IMR-90 (cell line): ENCODE measurements at regions of chr3 and their contacts with region 1.

Region 1: GRCh38 chr3:42652611-42653302 is 740 bp upstream of the ZBTB47 start:
- DNase-seq: peak; percentile 78
- ATAC-seq: peak; percentile 45
- H3K4me3 ChIP-seq: peak overlapping the region; percentile 70
- H3K27ac ChIP-seq: peak overlapping the region; percentile 77
- H3K4me1 ChIP-seq: peaks cover 35% of the 10 kb centered on the region
- H3K27me3 ChIP-seq: no peaks in the 10 kb centered on the region
- CTCF ChIP-seq: no peak
- POLR2A ChIP-seq: peak; percentile 58; the same call in 1 of the 2 replicates
- RAD21 ChIP-seq: no peak

Region 2: GRCh38 chr3:42090973-42091731 is 561.6 kb before region 1 on chr3 and contains the start of gene TRAK1:
- CTCF ChIA-PET with region 1: no interaction called
- POLR2A ChIA-PET with region 1: no interaction called
- dilution Hi-C with region 1: no loop called
- in situ Hi-C with region 1: no loop called
- intact Hi-C with region 1: loop called (anchors 5 kb)
- DNase-seq: no peak
- ATAC-seq: no peak
- H3K4me3 ChIP-seq: no peak within 1 kb of the TSS
- H3K27ac ChIP-seq: no peak within 1 kb of the TSS
- H3K4me1 ChIP-seq: peaks cover 5% of the 10 kb centered on the region
- H3K27me3 ChIP-seq: no peaks in the 10 kb centered on the region
- CTCF ChIP-seq: no peak
- POLR2A ChIP-seq: no peak
- RAD21 ChIP-seq: no peak
- total RNA-seq, gene TRAK1: 26.7 and 28.1 TPM in 2 replicates

Region 3: DNA sequence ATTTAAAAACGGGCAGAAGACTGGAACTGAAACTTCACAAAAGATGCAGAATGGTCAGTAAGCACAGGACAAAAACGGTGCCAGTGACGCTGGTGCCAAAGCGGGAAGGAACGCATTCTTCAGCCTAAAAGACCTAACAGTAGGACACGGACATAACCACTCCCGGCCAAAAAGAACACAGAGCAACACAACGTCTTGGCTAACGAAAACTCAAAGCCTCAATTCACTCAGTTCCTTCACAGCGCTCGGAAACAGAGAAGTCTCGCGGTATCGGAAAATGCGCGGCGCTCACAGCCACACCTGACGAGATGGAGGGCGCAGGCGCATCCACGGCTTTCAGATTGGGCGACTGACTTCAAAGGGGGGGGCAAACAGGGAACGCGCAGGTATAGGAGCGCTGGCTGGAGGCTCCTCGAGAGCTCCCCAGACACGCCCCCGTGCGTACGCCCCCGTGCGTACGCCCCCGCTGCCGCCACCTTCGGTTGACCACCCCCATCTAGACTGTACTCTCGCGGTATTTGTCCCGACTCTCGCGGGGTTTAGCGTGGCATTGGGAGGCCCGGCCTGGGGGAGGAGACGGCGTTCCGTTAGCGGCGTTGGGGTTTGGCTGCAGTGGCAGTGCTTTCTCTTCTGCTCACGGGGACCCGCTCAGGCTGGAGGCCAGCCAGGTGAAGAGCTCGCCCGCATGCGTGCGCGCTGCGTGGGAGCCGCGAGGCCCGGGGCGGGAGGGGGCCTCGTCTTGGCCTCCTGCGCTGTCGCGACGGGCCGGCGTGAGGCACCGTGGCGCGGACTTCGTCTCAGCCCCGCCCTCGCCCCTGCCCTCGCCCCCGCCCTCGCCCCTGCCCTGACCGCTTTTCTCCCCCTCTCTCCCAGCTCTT is 52.4 kb before region 1 on chr3 and contains the start of gene NKTR:
- CTCF ChIA-PET with region 1: no interaction called
- POLR2A ChIA-PET with region 1: no interaction called
- dilution Hi-C with region 1: no loop called
- in situ Hi-C with region 1: no loop called
- intact Hi-C with region 1: loop called (anchors 5 kb)
- DNase-seq: peak; percentile 97
- ATAC-seq: peak; percentile 94
- H3K4me3 ChIP-seq: peak within 1 kb of the TSS; percentile 64
- H3K27ac ChIP-seq: peak within 1 kb of the TSS; percentile 85
- H3K4me1 ChIP-seq: 0 out of 2 replicates have a peak, but pooled peaks cover 3% of the 10 kb centered on the region
- H3K27me3 ChIP-seq: no peaks in the 10 kb centered on the region
- CTCF ChIP-seq: no peak
- POLR2A ChIP-seq: peak; percentile 85
- RAD21 ChIP-seq: no peak
- total RNA-seq, gene NKTR: 24.0 and 51.4 TPM in 2 replicates

Region 4: DNA sequence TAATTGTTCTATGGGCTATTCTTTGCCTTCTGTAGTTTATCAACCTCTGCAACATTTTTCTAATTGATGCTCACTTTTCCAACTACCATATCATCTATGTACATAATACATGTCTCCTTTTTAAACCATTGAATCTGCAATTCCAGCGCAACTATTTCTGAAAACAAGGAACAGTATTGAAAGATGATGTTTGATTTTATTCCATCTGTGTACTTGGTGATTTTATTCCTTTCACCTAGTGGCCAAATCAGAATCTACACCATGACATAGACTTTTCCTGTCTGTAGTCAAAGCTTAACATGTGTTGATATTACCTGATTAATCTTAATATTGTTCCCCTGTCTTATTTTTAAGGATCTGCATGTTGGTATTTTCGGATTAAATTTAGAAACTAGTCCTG is 39.3 kb before region 1 on chr3:
- CTCF ChIA-PET with region 1: interaction called, 4 read pairs
- POLR2A ChIA-PET with region 1: no interaction called
- dilution Hi-C with region 1: no loop called
- in situ Hi-C with region 1: no loop called
- intact Hi-C with region 1: loop called (anchors 5 kb)
- DNase-seq: no peak
- ATAC-seq: no peak
- H3K4me3 ChIP-seq: no peak overlapping the region
- H3K27ac ChIP-seq: no peak overlapping the region
- H3K4me1 ChIP-seq: peaks cover 2% of the 10 kb centered on the region
- H3K27me3 ChIP-seq: no peaks in the 10 kb centered on the region
- CTCF ChIP-seq: peak; percentile 34; the same call in 1 of the 2 replicates
- POLR2A ChIP-seq: no peak
- RAD21 ChIP-seq: no peak

Region 5: DNA sequence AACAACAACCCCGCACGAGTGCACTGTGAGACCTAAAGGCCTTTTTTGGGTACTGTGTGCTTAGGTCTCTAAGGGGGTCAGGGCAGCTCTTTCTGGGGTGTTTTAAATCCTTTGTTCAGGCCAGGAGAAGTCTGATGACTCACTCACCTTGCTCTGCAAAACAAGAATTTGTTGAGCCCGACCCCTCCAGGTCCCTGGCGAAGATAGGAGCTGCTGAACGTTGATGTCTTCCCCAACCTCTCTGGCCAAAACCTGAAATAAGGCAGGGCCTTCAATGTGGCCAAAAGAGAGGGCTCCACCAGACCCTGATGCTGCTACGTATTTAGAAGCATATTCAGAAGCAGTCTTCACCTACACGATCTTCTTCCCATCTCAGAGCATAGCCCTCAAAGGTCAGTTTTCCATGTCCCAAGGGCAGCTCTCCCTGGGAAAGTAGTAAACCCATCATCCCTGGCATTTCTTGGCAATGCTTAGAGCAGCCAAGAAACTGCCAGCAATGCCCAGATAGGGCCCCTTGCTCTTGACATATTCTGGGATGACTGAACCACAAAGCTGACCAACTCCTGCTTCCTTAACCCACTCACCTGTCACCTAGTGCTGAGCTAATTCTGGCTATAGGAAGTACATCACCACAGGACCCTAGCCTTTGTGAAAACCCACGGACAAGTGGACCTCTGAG is 93.2 kb after region 1 on chr3:
- CTCF ChIA-PET with region 1: interaction called, 5 read pairs
- POLR2A ChIA-PET with region 1: no interaction called
- dilution Hi-C with region 1: no loop called
- in situ Hi-C with region 1: no loop called
- intact Hi-C with region 1: loop called (anchors 2 kb)
- DNase-seq: no peak
- ATAC-seq: no peak
- H3K4me3 ChIP-seq: no peak overlapping the region
- H3K27ac ChIP-seq: no peak overlapping the region
- H3K4me1 ChIP-seq: peaks cover 12% of the 10 kb centered on the region
- H3K27me3 ChIP-seq: peaks cover 5% of the 10 kb centered on the region; the same call in 1 of the 2 replicates
- CTCF ChIP-seq: no peak
- POLR2A ChIP-seq: no peak
- RAD21 ChIP-seq: no peak